ENCODE measurements at regions of chr9 and their contacts with region 1.

Region 1: GRCh38 chr9:87662808-87663528 is 63.0 kb upstream of the CTSL start:
- DNase-seq: peak; percentile 44 to 95 (median 77)

Region 2: GRCh38 chr9:86434039-86434726 is 1228.8 kb before region 1 on chr9:
- intact Hi-C with region 1: loop called (anchors 10 kb)
- DNase-seq: no peak

Region 3: DNA sequence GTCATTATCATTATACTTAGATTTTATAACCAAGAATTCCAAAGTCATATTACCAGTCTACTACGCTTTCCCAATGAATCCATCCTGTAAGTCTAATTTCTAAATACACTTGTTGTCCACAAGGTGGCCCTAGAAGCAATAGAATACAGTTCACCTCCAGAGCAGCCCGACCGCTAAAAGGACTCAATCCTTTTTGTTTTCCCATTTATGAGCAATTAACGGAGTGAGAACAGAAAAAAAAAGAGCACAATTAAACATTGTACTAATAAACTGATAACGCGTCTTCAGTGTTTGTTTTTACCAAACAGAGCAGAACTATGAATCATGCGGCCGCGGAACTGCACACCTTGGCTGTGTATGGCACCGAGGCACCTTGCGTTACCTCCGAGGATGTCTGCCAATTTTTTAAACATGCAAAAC is 326.0 kb before region 1 on chr9:
- intact Hi-C with region 1: loop called (anchors 1 kb)
- DNase-seq: no peak

Region 4: GRCh38 chr9:87711857-87712800 is 49.2 kb after region 1 on chr9:
- intact Hi-C with region 1: no loop called
- DNase-seq: no peak

Measured in posterior cingulate gyrus (tissue), 11 donors.